Activated CD4-positive, alpha-beta memory T cell treated with anti-CD3 and anti-CD28 coated beads for 36 hours (primary cell): ENCODE measurements at regions of chr7 and their contacts with region 1.

Region 1: GRCh38 chr7:106485031-106485551 is 175.9 kb downstream of the CCDC71L start:
- DNase-seq: peak; percentile 22
- H3K4me3 Mint-ChIP-seq: no peak overlapping the region
- H3K27ac Mint-ChIP-seq: peak overlapping the region; percentile 78
- H3K4me1 Mint-ChIP-seq: peaks cover 58% of the 10 kb centered on the region
- H3K27me3 Mint-ChIP-seq: peaks cover 18% of the 10 kb centered on the region

Region 2: GRCh38 chr7:106126170-106126938 is 358.7 kb before region 1 on chr7:
- CTCF ChIA-PET with region 1: no interaction called
- POLR2A ChIA-PET with region 1: no interaction called
- intact Hi-C with region 1: no loop called
- DNase-seq: peak; percentile 56
- H3K4me3 Mint-ChIP-seq: peak overlapping the region; percentile 56
- H3K27ac Mint-ChIP-seq: peak overlapping the region; percentile 14
- H3K4me1 Mint-ChIP-seq: peaks cover 14% of the 10 kb centered on the region
- H3K27me3 Mint-ChIP-seq: peaks cover 3% of the 10 kb centered on the region

Region 3: DNA sequence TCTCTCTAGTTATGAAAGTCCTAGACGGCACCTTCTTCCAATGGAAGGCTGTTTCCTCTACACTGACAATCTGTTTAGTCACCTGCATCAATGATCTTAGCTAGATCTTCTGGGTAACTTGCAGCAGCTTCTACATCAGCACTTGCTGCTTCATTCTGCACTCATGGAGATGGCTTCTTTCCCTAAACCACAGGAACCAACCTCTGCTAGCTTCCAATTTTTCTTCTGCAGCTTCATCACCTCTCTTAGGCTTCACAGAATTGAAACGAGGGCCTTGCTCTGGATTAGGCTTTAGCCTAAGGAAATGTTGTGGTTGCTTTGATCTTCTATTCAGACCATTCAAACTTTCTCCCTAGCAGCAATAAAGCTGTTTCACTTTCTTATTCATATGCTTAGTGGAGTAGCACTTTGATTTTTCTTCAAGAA is 224.9 kb before region 1 on chr7:
- CTCF ChIA-PET with region 1: no interaction called
- POLR2A ChIA-PET with region 1: interaction called, 3 read pairs
- intact Hi-C with region 1: loop called (anchors 1 kb)
- DNase-seq: no peak
- H3K4me3 Mint-ChIP-seq: no peak overlapping the region
- H3K27ac Mint-ChIP-seq: peak overlapping the region; percentile 78
- H3K4me1 Mint-ChIP-seq: peaks cover 75% of the 10 kb centered on the region
- H3K27me3 Mint-ChIP-seq: no peaks in the 10 kb centered on the region

Region 4: GRCh38 chr7:106285051-106285854 is 199.8 kb before region 1 on chr7:
- CTCF ChIA-PET with region 1: interaction called, 4 read pairs
- POLR2A ChIA-PET with region 1: interaction called, 22 read pairs
- intact Hi-C with region 1: loop called (anchors 1 kb)
- DNase-seq: peak; percentile 100
- H3K4me3 Mint-ChIP-seq: peak overlapping the region; percentile 92
- H3K27ac Mint-ChIP-seq: peak overlapping the region; percentile 99
- H3K4me1 Mint-ChIP-seq: peaks cover 50% of the 10 kb centered on the region
- H3K27me3 Mint-ChIP-seq: peaks cover 2% of the 10 kb centered on the region

Region 5: GRCh38 chr7:106425017-106425719 is 59.9 kb before region 1 on chr7:
- CTCF ChIA-PET with region 1: interaction called, 3 read pairs
- POLR2A ChIA-PET with region 1: interaction called, 9 read pairs
- intact Hi-C with region 1: loop called (anchors 1 kb)
- DNase-seq: peak; percentile 91
- H3K4me3 Mint-ChIP-seq: peak overlapping the region; percentile 65
- H3K27ac Mint-ChIP-seq: peak overlapping the region; percentile 97
- H3K4me1 Mint-ChIP-seq: peaks cover 81% of the 10 kb centered on the region
- H3K27me3 Mint-ChIP-seq: no peaks in the 10 kb centered on the region

Region 6: DNA sequence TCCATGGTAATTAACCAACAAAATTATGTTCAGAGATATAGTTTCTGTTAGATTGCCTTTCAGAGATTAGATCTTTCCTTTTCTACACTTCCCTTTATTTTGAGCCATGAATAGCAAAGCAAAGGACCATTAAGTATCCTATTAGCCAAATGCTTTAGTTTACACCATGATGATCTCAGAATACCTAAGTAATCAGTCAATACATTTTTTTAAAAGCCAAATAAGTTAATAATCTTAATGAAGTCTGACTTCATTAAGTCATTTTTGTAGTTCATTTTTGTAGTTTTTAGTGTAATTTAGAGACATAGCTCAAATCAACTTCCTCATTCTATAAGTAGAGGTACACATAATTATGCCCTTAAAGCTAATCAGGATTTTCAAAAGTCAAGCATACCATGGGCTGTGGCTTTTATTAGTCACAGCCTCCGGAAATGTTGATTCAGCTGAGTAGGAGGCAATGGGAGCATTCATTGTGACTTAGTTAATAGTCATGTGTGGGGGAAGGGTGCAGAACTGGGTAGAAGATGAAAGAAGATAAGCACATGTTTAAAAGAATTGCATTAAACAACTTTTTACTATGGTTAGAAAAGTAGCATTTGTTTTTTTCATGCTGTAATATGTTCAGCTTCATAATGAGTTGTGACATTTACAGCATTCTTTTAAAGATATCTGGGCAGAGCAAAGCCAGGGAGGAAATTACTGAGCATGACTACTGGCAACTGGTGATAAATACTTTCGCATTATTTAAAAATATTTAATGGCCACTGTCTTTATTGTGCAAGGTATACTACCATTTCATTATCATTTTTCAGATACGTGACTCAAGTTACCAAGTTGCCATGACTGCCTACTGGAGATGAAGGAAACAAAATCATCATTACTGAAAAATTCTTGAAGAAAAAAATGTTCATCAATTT is 233.1 kb after region 1 on chr7:
- CTCF ChIA-PET with region 1: no interaction called
- POLR2A ChIA-PET with region 1: no interaction called
- intact Hi-C with region 1: loop called (anchors 1 kb)
- DNase-seq: peak; percentile 90
- H3K4me3 Mint-ChIP-seq: no peak overlapping the region
- H3K27ac Mint-ChIP-seq: no peak overlapping the region
- H3K4me1 Mint-ChIP-seq: peaks cover 12% of the 10 kb centered on the region
- H3K27me3 Mint-ChIP-seq: no peaks in the 10 kb centered on the region